ENCODE measurements at regions of chr12 and their contacts with region 1.

Region 1: GRCh38 chr12:24201258-24201970 is 251.9 kb upstream of the SOX5 start:
- DNase-seq: peak; percentile 32
- ATAC-seq: peak; percentile 71
- H3K4me3 ChIP-seq: no peak overlapping the region
- H3K27ac ChIP-seq: peak overlapping the region; percentile 55
- H3K4me1 ChIP-seq: peaks cover 2% of the 10 kb centered on the region; the same call in 1 of the 2 replicates
- H3K27me3 ChIP-seq: no peaks in the 10 kb centered on the region
- CTCF ChIP-seq: no peak
- EP300 ChIP-seq: 0 out of 4 replicates have a peak, but pooled peaks of 1 of the 2 experiments have one; percentile 18
- POLR2A ChIP-seq: no peak
- RAD21 ChIP-seq: no peak

Region 2: DNA sequence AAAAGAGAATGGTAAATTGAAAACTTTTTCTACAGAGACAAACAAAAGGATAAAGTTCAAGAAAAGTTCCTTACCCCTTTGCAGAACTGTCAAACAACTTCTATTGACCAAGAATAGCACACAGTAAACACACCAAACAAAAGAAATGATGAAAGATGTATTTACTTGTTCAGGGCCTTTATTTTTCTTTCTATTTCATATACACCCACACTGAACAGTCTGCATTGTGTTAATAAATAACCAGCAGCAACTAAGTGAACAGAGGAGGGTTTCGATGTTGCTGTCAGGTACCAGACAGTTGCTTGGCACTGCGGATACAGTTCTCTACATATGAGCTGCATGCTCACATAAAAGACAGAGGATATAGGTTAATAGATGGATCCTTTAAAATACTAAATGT is 374.1 kb before region 1 on chr12:
- CTCF ChIA-PET with region 1: no interaction called
- POLR2A ChIA-PET with region 1: no interaction called
- RAD21 ChIA-PET with region 1: no interaction called
- SMC1A ChIA-PET with region 1: no interaction called
- in situ Hi-C with region 1: no loop called
- intact Hi-C with region 1: no loop called
- DNase-seq: no peak
- ATAC-seq: peak; percentile 84
- H3K4me3 ChIP-seq: no peak overlapping the region
- H3K27ac ChIP-seq: no peak overlapping the region
- H3K4me1 ChIP-seq: no peaks in the 10 kb centered on the region
- H3K27me3 ChIP-seq: no peaks in the 10 kb centered on the region
- CTCF ChIP-seq: no peak
- EP300 ChIP-seq: no peak
- POLR2A ChIP-seq: no peak
- RAD21 ChIP-seq: no peak

Region 3: DNA sequence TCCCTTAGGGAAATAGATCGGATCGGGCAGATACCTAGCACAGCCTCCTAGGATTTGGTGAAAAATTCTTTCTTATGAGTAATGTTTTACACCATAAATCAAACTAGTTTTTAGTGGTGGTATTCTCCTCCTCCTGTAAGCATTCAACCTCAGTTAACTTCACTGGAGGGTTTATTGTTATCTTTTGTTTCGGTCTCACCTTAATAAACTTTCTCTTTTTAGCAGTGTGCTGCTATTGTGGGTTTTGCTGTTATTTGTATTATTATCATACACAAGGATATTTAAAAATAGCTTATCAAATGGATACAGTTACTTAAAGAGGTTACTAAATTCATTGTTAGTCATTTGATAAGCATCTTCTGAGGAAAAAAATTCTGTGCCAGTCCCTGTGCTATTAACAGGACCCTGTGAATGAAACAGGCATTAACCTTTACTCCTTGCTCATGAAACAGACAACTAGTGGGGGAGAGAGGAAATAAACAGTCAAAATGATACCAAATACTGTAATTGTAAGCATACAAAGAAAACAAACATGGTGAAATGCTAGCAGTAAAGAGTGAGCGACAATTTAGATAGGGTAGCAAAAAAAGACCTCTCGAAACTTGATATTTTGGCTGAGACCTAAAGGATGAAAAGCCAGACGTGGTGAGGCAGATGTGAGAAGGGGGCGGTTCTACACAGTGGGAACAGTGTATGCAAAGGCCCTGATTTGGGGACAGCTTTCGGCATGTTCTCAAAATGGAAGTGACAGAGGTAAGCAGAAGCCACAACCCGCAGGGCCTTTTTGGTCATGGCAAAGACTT is 73.3 kb before region 1 on chr12:
- CTCF ChIA-PET with region 1: no interaction called
- POLR2A ChIA-PET with region 1: no interaction called
- RAD21 ChIA-PET with region 1: interaction called, 3 read pairs
- SMC1A ChIA-PET with region 1: interaction called, 5 read pairs
- in situ Hi-C with region 1: no loop called
- intact Hi-C with region 1: loop called (anchors 1 kb)
- DNase-seq: peak; percentile 63
- ATAC-seq: peak; percentile 96
- H3K4me3 ChIP-seq: no peak overlapping the region; the same call in 1 of the 2 replicates
- H3K27ac ChIP-seq: no peak overlapping the region
- H3K4me1 ChIP-seq: peaks cover 8% of the 10 kb centered on the region
- H3K27me3 ChIP-seq: 0 out of 4 replicates have a peak, but pooled peaks cover 0 to 2% of the 10 kb centered on the region in 2 experiments
- CTCF ChIP-seq: no peak
- EP300 ChIP-seq: peak; percentile 50 to 61; a peak in 2 of 4 replicates
- POLR2A ChIP-seq: no peak
- RAD21 ChIP-seq: no peak

Region 4: GRCh38 chr12:24172031-24172772 is 29.2 kb before region 1 on chr12:
- CTCF ChIA-PET with region 1: interaction called, 6 read pairs
- POLR2A ChIA-PET with region 1: interaction called, 4 read pairs
- RAD21 ChIA-PET with region 1: interaction called, 4 read pairs
- SMC1A ChIA-PET with region 1: interaction called, 12 read pairs
- in situ Hi-C with region 1: no loop called
- intact Hi-C with region 1: loop called (anchors 2 kb)
- DNase-seq: peak; percentile 71
- ATAC-seq: peak; percentile 83
- H3K4me3 ChIP-seq: 0 out of 2 replicates have a peak overlapping the region, but pooled peaks have one; percentile 24
- H3K27ac ChIP-seq: peak overlapping the region; percentile 11
- H3K4me1 ChIP-seq: peaks cover 20% of the 10 kb centered on the region
- H3K27me3 ChIP-seq: no peaks in the 10 kb centered on the region
- CTCF ChIP-seq: no peak
- EP300 ChIP-seq: peak; percentile 73 to 81; a peak in 2 of 4 replicates
- POLR2A ChIP-seq: no peak
- RAD21 ChIP-seq: no peak

Region 5: GRCh38 chr12:24177889-24178288 is 23.5 kb before region 1 on chr12:
- CTCF ChIA-PET with region 1: interaction called, 6 read pairs
- POLR2A ChIA-PET with region 1: interaction called, 5 read pairs
- RAD21 ChIA-PET with region 1: interaction called, 4 read pairs
- SMC1A ChIA-PET with region 1: interaction called, 12 read pairs
- in situ Hi-C with region 1: no loop called
- intact Hi-C with region 1: loop called (anchors 2 kb)
- DNase-seq: peak; percentile 73
- ATAC-seq: peak; percentile 91
- H3K4me3 ChIP-seq: no peak overlapping the region
- H3K27ac ChIP-seq: no peak overlapping the region
- H3K4me1 ChIP-seq: peaks cover 6% of the 10 kb centered on the region
- H3K27me3 ChIP-seq: no peaks in the 10 kb centered on the region
- CTCF ChIP-seq: no peak
- EP300 ChIP-seq: peak; percentile 64 to 78; a peak in 3 of 4 replicates
- POLR2A ChIP-seq: no peak
- RAD21 ChIP-seq: no peak

Region 6: GRCh38 chr12:24226745-24227350 is 25.4 kb after region 1 on chr12:
- CTCF ChIA-PET with region 1: interaction called, 7 read pairs
- POLR2A ChIA-PET with region 1: interaction called, 3 read pairs
- RAD21 ChIA-PET with region 1: interaction called, 4 read pairs
- SMC1A ChIA-PET with region 1: interaction called, 10 read pairs
- in situ Hi-C with region 1: no loop called
- intact Hi-C with region 1: no loop called
- DNase-seq: no peak
- ATAC-seq: peak; percentile 54
- H3K4me3 ChIP-seq: no peak overlapping the region
- H3K27ac ChIP-seq: no peak overlapping the region
- H3K4me1 ChIP-seq: no peaks in the 10 kb centered on the region
- H3K27me3 ChIP-seq: no peaks in the 10 kb centered on the region
- CTCF ChIP-seq: no peak
- EP300 ChIP-seq: no peak
- POLR2A ChIP-seq: no peak
- RAD21 ChIP-seq: no peak